Activated CD4-positive, alpha-beta memory T cell treated with anti-CD3 and anti-CD28 coated beads for 36 hours (primary cell): ENCODE measurements at regions of chr12 and their contacts with region 1.

Region 1: DNA sequence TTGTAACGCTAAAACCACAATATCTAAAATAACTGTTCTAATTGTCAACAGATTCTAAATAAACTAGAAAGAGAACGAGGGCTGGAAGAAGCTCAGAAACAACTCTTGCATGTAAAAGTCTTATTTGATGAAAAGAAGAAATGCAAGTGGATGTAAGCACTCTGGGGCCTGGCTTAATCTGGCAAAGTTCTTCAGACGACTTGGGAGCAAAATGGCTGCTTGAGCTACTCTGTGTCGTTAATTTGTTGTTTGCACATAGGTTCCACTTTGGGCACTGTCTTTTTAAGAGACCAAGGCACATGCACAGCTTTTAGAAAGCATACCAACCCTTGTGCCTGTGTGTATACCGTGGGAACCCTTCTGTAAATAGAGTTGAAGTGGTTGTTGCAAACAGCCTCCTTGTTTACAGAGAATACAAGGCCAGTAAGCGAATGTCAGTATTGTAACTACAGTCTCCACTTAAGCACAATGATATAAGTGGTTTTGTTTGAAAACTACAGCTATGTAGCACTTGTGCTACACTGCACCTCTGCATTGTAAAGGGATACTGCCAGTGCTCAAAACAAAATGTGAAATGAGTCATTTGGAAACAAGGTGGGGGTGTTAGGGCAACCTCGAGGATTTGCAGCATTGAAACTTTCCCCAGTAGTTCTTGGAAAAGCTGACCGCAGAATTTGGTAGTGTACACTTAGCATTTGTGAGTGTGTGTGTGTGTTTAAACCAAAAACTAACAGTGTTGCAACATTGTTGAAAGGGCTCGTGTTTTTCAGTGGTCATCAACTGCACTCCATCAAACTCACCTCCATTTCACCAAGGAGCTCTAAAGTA is 154.3 kb downstream of the CEP83 start:
- DNase-seq: peak; percentile 70
- H3K4me3 Mint-ChIP-seq: no peak overlapping the region
- H3K27ac Mint-ChIP-seq: peak overlapping the region; percentile 61
- H3K4me1 Mint-ChIP-seq: peaks cover 39% of the 10 kb centered on the region
- H3K27me3 Mint-ChIP-seq: no peaks in the 10 kb centered on the region

Region 2: DNA sequence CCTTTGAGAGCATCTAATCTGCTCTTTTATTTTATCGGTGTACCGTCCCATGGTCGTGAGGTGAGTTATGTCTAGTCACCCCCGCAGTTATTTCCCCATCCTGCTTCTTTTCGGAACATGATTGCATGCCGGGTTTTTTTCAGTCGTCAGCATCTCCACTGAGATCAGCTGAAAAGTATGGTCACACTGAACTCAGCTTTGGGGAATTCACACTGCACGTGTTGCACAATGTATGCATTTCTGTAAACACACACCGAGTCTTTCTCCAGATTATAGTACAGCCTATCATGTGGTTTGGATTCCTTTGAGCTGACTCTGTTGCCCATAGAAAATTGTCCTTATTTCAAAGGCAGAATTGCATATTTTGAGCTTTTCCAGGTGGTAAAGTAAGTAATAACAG is 132.4 kb before region 1 on chr12:
- CTCF ChIA-PET with region 1: no interaction called
- POLR2A ChIA-PET with region 1: no interaction called
- intact Hi-C with region 1: loop called (anchors 1 kb)
- DNase-seq: no peak
- H3K4me3 Mint-ChIP-seq: no peak overlapping the region
- H3K27ac Mint-ChIP-seq: no peak overlapping the region
- H3K4me1 Mint-ChIP-seq: peaks cover 60% of the 10 kb centered on the region
- H3K27me3 Mint-ChIP-seq: no peaks in the 10 kb centered on the region

Region 3: DNA sequence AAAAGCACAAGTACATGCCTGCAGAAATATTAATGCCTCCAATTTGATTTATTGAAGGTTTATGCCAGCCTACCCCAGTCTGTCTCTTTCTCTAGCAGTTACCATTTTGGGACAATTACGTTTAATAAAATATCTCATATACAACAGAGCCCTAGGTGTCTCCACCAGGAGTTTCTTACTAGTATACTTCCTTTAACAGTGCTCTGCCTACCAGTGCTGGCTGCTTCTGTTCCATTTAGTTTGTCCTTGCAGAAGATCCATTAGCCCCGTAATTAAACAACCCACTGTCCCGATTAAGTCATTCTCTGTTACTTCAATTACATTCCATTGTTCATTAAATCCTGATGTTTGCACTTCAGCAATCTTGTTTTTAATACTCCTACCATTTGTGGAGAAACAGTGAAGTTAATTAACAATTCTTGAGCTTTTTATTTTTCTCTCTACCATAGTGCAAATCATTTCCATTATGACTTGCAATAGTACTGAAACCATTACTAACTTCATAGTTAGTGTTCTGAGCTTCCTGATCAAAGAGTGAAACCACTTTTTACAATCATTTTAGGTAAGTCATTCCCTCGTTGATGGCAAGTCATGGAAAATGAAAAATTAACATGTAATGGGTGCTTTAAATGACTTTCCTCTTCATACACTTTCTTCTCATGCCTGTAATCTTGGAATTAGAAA is 35.9 kb before region 1 on chr12:
- CTCF ChIA-PET with region 1: no interaction called
- POLR2A ChIA-PET with region 1: interaction called, 10 read pairs
- intact Hi-C with region 1: loop called (anchors 1 kb)
- DNase-seq: no peak
- H3K4me3 Mint-ChIP-seq: no peak overlapping the region
- H3K27ac Mint-ChIP-seq: no peak overlapping the region
- H3K4me1 Mint-ChIP-seq: peaks cover 49% of the 10 kb centered on the region
- H3K27me3 Mint-ChIP-seq: no peaks in the 10 kb centered on the region

Region 4: GRCh38 chr12:94326727-94327126 is 21.4 kb after region 1 on chr12:
- CTCF ChIA-PET with region 1: interaction called, 5 read pairs
- POLR2A ChIA-PET with region 1: interaction called, 4 read pairs
- intact Hi-C with region 1: loop called (anchors 1 kb)
- DNase-seq: peak; percentile 20
- H3K4me3 Mint-ChIP-seq: no peak overlapping the region
- H3K27ac Mint-ChIP-seq: peak overlapping the region; percentile 8
- H3K4me1 Mint-ChIP-seq: peaks cover 24% of the 10 kb centered on the region
- H3K27me3 Mint-ChIP-seq: no peaks in the 10 kb centered on the region

Region 5: GRCh38 chr12:94427501-94428381 is 122.4 kb after region 1 on chr12:
- CTCF ChIA-PET with region 1: no interaction called
- POLR2A ChIA-PET with region 1: no interaction called
- intact Hi-C with region 1: loop called (anchors 5 kb)
- DNase-seq: peak; percentile 16
- H3K4me3 Mint-ChIP-seq: no peak overlapping the region
- H3K27ac Mint-ChIP-seq: peak overlapping the region; percentile 54
- H3K4me1 Mint-ChIP-seq: peaks cover 29% of the 10 kb centered on the region
- H3K27me3 Mint-ChIP-seq: no peaks in the 10 kb centered on the region

Region 6: DNA sequence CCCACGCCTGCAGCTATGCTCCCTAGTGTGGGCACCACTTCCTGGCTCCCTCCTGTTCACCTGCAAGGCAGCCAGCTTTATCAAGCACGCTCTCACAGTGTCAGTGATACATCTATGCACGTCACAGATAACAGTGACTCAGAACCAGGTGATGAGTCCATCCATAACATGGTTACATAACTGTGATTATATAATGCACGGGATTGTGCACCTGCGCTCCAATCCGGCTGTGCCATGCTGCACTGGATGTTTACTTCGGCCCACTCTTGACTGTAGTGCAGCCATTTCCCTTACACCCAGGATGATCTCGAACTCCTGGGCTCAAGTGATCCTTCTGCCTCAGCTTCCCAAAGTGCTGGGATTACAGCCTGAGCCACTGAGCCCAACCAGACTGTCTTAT is 192.7 kb after region 1 on chr12:
- CTCF ChIA-PET with region 1: no interaction called
- POLR2A ChIA-PET with region 1: no interaction called
- intact Hi-C with region 1: no loop called
- DNase-seq: no peak
- H3K4me3 Mint-ChIP-seq: no peak overlapping the region
- H3K27ac Mint-ChIP-seq: no peak overlapping the region
- H3K4me1 Mint-ChIP-seq: no peaks in the 10 kb centered on the region
- H3K27me3 Mint-ChIP-seq: peaks cover 3% of the 10 kb centered on the region

Region 7: DNA sequence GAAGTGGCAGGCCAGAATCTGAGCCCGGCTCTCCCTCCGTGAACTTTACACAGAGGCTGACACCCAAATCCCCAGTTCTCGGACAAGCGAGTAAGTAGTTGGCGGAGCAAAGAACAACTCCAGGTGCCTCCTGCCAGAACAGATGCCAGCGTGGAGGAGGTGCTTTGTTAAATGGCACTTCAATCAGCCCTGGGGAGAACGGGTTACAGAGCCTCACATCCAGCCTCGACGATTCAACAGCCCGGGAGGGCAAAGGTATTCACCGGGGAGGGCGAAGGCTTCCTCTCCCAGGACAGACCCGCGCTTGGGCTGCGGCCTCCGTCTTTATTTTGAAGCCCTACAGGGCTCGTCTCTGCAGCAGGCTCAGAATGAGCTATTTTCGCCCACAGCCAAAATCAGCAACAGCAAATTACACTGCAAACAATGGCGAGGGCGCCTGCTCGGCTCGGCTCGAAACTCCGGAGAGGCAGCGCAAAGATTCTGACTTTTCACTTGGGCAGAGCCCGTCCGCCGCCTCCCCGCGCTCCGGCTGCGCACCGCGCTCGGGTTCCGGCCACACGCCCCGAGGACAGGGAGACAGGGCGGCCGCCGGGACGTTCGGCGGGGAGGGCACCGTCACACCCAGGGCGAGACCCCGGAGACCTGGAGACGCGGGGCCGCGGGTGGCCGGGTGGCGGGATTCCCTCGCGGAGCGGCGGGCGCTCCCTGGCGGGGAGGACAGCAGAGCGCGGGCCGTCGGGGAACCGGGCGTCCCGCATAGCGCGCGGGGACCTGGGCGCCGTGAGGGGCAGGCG is 344.2 kb after region 1 on chr12:
- CTCF ChIA-PET with region 1: no interaction called
- POLR2A ChIA-PET with region 1: no interaction called
- intact Hi-C with region 1: loop called (anchors 10 kb)
- DNase-seq: peak; percentile 29
- H3K4me3 Mint-ChIP-seq: peak overlapping the region; percentile 65
- H3K27ac Mint-ChIP-seq: no peak overlapping the region
- H3K4me1 Mint-ChIP-seq: peaks cover 13% of the 10 kb centered on the region
- H3K27me3 Mint-ChIP-seq: peaks cover 56% of the 10 kb centered on the region

Region 8: GRCh38 chr12:94710933-94711332 is 405.6 kb after region 1 on chr12:
- CTCF ChIA-PET with region 1: no interaction called
- POLR2A ChIA-PET with region 1: no interaction called
- intact Hi-C with region 1: no loop called
- DNase-seq: peak; percentile 32
- H3K4me3 Mint-ChIP-seq: no peak overlapping the region
- H3K27ac Mint-ChIP-seq: no peak overlapping the region
- H3K4me1 Mint-ChIP-seq: peaks cover 4% of the 10 kb centered on the region
- H3K27me3 Mint-ChIP-seq: no peaks in the 10 kb centered on the region